CD8-positive, alpha-beta T cell (primary cell): ENCODE measurements at regions of chr11 and their contacts with region 1.

Region 1: DNA sequence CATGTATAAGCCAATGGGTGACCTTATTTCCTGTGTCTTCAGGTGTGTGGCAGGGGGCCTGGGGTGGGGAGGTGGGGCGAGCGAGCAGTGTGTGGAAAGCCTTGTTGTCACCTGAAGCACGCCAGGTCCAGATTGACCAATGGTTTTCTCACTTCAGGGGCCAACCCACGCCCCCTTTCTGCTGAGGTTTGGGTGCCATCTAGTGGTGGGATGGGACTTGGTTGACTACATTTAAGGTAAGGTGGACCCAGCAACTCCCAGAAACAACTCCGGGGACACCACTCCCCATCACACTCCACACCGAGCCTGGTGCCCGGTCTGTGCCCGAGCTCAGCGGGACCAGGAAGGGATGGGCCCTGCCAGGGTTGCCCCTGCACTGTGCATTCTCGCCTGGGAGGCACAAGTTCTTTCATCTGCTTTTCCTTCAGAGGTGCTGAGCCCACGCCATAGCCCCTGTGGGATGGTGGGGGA is 40.0 kb downstream of the TPCN2 start:
- DNase-seq: peak; percentile 20 to 69 (median 53)
- ATAC-seq: peak; percentile 71
- H3K4me3 ChIP-seq: no peak overlapping the region
- H3K4me3 Mint-ChIP-seq: no peak overlapping the region
- H3K27ac ChIP-seq: no peak overlapping the region
- H3K27ac Mint-ChIP-seq: no peak overlapping the region
- H3K4me1 ChIP-seq: no peaks in the 10 kb centered on the region
- H3K4me1 Mint-ChIP-seq: no peaks in the 10 kb centered on the region
- H3K27me3 ChIP-seq: no peaks in the 10 kb centered on the region
- H3K27me3 Mint-ChIP-seq: no peaks in the 10 kb centered on the region
- CTCF ChIP-seq: peak; percentile 62

Region 2: DNA sequence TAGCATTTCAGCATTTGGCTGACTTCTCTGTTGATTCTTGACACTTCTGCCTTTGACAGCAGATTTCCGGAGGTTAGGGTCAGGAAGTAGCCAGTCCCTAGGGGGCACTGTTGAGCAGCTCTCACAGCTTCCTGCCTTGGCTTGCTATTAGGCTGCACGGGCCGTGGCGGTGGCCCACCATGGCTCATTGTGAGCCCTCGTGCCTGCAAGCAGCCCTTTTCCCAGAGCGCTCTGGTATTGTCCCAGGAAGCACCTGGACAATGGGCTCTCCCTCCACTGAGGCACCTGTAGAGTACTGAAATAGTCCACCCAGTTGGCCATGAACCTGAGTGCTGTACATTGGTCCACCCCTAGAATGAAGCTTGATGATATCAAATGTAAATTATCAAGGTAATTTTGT is 504.6 kb before region 1 on chr11:
- CTCF ChIA-PET with region 1: no interaction called
- POLR2A ChIA-PET with region 1: no interaction called
- intact Hi-C with region 1: loop called in 1 of 2 experiments (anchors 5 kb)
- DNase-seq: peak; percentile 22 to 71 (median 58)
- ATAC-seq: peak; percentile 75
- H3K4me3 ChIP-seq: no peak overlapping the region
- H3K4me3 Mint-ChIP-seq: no peak overlapping the region
- H3K27ac ChIP-seq: no peak overlapping the region
- H3K27ac Mint-ChIP-seq: no peak overlapping the region
- H3K4me1 ChIP-seq: no peaks in the 10 kb centered on the region
- H3K4me1 Mint-ChIP-seq: peaks cover 5% of the 10 kb centered on the region
- H3K27me3 ChIP-seq: no peaks in the 10 kb centered on the region
- H3K27me3 Mint-ChIP-seq: no peaks in the 10 kb centered on the region
- CTCF ChIP-seq: peak; percentile 69

Region 3: GRCh38 chr11:68632802-68633201 is 455.9 kb before region 1 on chr11:
- CTCF ChIA-PET with region 1: interaction called, 4 read pairs
- POLR2A ChIA-PET with region 1: no interaction called
- intact Hi-C with region 1: loop called (anchors 2 to 5 kb)
- DNase-seq: peak in 8 of 9 experiments; percentile 12 to 67 (median 50)
- ATAC-seq: no peak
- H3K4me3 ChIP-seq: no peak overlapping the region
- H3K4me3 Mint-ChIP-seq: no peak overlapping the region
- H3K27ac ChIP-seq: no peak overlapping the region
- H3K27ac Mint-ChIP-seq: no peak overlapping the region
- H3K4me1 ChIP-seq: no peaks in the 10 kb centered on the region
- H3K4me1 Mint-ChIP-seq: no peaks in the 10 kb centered on the region
- H3K27me3 ChIP-seq: no peaks in the 10 kb centered on the region
- H3K27me3 Mint-ChIP-seq: peaks cover 6% of the 10 kb centered on the region
- CTCF ChIP-seq: peak; percentile 17

Region 4: GRCh38 chr11:68956142-68956541 is 132.6 kb before region 1 on chr11:
- CTCF ChIA-PET with region 1: no interaction called
- POLR2A ChIA-PET with region 1: no interaction called
- intact Hi-C with region 1: loop called in 1 of 2 experiments (anchors 2 kb)
- DNase-seq: peak in 5 of 9 experiments; percentile 9 to 51 (median 41)
- ATAC-seq: peak; percentile 44
- H3K4me3 ChIP-seq: no peak overlapping the region
- H3K4me3 Mint-ChIP-seq: no peak overlapping the region
- H3K27ac ChIP-seq: no peak overlapping the region
- H3K27ac Mint-ChIP-seq: no peak overlapping the region
- H3K4me1 ChIP-seq: no peaks in the 10 kb centered on the region
- H3K4me1 Mint-ChIP-seq: peaks cover 3% of the 10 kb centered on the region
- H3K27me3 ChIP-seq: no peaks in the 10 kb centered on the region
- H3K27me3 Mint-ChIP-seq: peaks cover 4% of the 10 kb centered on the region
- CTCF ChIP-seq: no peak

Region 5: DNA sequence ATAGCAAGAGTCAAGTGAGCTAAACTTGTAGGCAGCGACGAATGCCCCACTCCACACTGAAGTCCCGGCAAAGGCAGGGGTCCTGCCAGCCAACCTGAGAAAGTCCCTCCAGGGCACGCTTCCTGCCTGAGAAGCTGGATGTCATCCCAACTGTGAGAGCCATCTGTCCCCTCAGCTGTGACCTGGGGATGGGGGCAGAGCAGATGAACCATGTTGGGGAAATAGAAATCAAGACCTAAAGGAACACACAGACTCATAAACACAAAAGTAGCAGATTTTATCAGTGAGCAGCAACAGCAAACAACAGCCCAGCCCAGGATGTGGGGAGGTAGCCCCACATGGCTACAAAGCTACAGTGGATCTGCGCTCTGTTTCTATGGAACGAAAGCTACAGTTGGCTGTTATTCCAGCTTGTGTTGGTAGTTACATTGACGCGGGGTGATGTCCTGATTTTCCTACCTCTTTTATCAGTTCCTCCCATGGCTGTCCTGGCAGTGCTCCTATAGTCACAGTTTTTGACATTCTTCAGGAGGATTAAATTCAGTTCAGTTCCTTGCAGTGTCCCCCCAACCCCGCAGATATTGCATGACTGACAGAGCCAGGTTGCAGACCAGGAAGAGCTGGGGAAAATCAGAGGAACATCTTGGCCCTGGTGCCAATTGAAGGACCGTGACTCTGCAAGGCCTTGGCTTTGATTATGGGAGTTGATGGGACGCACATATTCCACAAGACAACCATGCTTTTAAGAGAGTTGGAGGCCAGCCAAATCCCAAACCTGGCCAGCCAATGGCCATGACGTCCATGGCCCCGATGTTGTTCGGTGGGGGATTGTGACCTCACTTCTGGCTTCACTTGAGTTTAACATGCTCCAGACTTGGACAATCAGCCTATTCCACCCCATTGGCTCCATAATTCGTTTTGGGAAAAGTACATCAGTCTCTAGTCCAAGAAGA is 122.5 kb before region 1 on chr11:
- CTCF ChIA-PET with region 1: no interaction called
- POLR2A ChIA-PET with region 1: no interaction called
- intact Hi-C with region 1: no loop called
- DNase-seq: peak in 3 of 9 experiments; percentile 7 to 48 (median 25)
- ATAC-seq: peak; percentile 39
- H3K4me3 ChIP-seq: no peak overlapping the region
- H3K4me3 Mint-ChIP-seq: no peak overlapping the region
- H3K27ac ChIP-seq: no peak overlapping the region
- H3K27ac Mint-ChIP-seq: peak overlapping the region; percentile 21
- H3K4me1 ChIP-seq: no peaks in the 10 kb centered on the region
- H3K4me1 Mint-ChIP-seq: peaks cover 17% of the 10 kb centered on the region
- H3K27me3 ChIP-seq: no peaks in the 10 kb centered on the region
- H3K27me3 Mint-ChIP-seq: peaks cover 1% of the 10 kb centered on the region
- CTCF ChIP-seq: no peak

Region 6: GRCh38 chr11:69055598-69056516 is 32.9 kb before region 1 on chr11:
- CTCF ChIA-PET with region 1: no interaction called
- POLR2A ChIA-PET with region 1: no interaction called
- intact Hi-C with region 1: no loop called
- DNase-seq: peak in 5 of 9 experiments; percentile 9 to 78 (median 57)
- ATAC-seq: peak; percentile 83
- H3K4me3 ChIP-seq: no peak overlapping the region
- H3K4me3 Mint-ChIP-seq: no peak overlapping the region
- H3K27ac ChIP-seq: peak overlapping the region in 1 of 2 experiments; percentile 78
- H3K27ac Mint-ChIP-seq: peak overlapping the region; percentile 86
- H3K4me1 ChIP-seq: no peaks in the 10 kb centered on the region
- H3K4me1 Mint-ChIP-seq: peaks cover 26% of the 10 kb centered on the region
- H3K27me3 ChIP-seq: no peaks in the 10 kb centered on the region
- H3K27me3 Mint-ChIP-seq: no peaks in the 10 kb centered on the region
- CTCF ChIP-seq: no peak